ENCODE measurements at regions of chrX and their contacts with region 1.

Region 1: GRCh38 chrX:37349221-37350064 is at the start of gene PRRG1:
- DNase-seq: peak; percentile 82 to 86
- H3K4me3 ChIP-seq: peak within 1 kb of the TSS; percentile 88
- H3K4me3 Mint-ChIP-seq: peak within 1 kb of the TSS; percentile 93
- H3K27ac Mint-ChIP-seq: peak within 1 kb of the TSS; percentile 95
- H3K4me1 ChIP-seq: peaks cover 18% of the 10 kb centered on the region; the same call in 1 of the 2 replicates
- H3K4me1 Mint-ChIP-seq: peaks cover 13% of the 10 kb centered on the region
- H3K27me3 ChIP-seq: no peaks in the 10 kb centered on the region
- H3K27me3 Mint-ChIP-seq: no peaks in the 10 kb centered on the region
- CTCF ChIP-seq: no peak
- total RNA-seq, gene PRRG1: 14.0 and 15.8 TPM in 2 replicates

Region 2: GRCh38 chrX:36913551-36913950 is 435.9 kb before region 1 on chrX:
- CTCF ChIA-PET with region 1: no interaction called
- POLR2A ChIA-PET with region 1: no interaction called
- intact Hi-C with region 1: no loop called
- DNase-seq: no peak
- H3K4me3 ChIP-seq: no peak overlapping the region
- H3K4me3 Mint-ChIP-seq: no peak overlapping the region
- H3K27ac Mint-ChIP-seq: no peak overlapping the region
- H3K4me1 ChIP-seq: no peaks in the 10 kb centered on the region
- H3K4me1 Mint-ChIP-seq: no peaks in the 10 kb centered on the region
- H3K27me3 ChIP-seq: no peaks in the 10 kb centered on the region
- H3K27me3 Mint-ChIP-seq: no peaks in the 10 kb centered on the region
- CTCF ChIP-seq: no peak

Region 3: DNA sequence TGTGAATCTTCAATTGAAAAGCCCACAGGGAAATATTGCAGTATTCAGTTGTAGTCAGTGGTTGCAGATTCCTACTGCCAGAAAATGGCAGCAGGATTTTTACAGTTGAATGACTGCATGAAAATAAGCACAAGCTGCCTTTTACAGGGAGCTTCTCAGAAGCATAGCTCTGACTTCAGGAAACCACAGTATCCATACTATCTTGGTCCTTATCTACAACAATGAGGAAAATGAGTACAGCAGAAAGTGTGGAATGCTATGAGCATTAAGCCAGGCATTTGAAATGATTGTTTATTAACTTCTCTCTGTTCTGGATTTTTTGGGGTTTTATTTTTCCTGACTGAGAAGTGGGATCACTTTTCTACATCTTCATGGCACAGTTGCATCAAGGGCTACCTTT is 34.9 kb before region 1 on chrX:
- CTCF ChIA-PET with region 1: interaction called, 3 read pairs
- POLR2A ChIA-PET with region 1: interaction called, 3 read pairs
- intact Hi-C with region 1: loop called (anchors 1 kb)
- DNase-seq: no peak
- H3K4me3 ChIP-seq: no peak overlapping the region
- H3K4me3 Mint-ChIP-seq: no peak overlapping the region
- H3K27ac Mint-ChIP-seq: peak overlapping the region; percentile 86
- H3K4me1 ChIP-seq: peaks cover 53% of the 10 kb centered on the region
- H3K4me1 Mint-ChIP-seq: peaks cover 35% of the 10 kb centered on the region
- H3K27me3 ChIP-seq: no peaks in the 10 kb centered on the region
- H3K27me3 Mint-ChIP-seq: no peaks in the 10 kb centered on the region
- CTCF ChIP-seq: no peak

Measured in Caco-2 (cell line).